CD4-positive, alpha-beta memory T cell (primary cell): ENCODE measurements at regions of chr4 and their contacts with region 1.

Region 1: GRCh38 chr4:47933840-47934239 is 19.5 kb upstream of the NFXL1 start:
- DNase-seq: peak in 4 of 5 donors; percentile 41 to 53 (median 50)
- H3K4me3 ChIP-seq: no peak overlapping the region
- H3K4me3 Mint-ChIP-seq: no peak overlapping the region
- H3K27ac ChIP-seq: no peak overlapping the region
- H3K27ac Mint-ChIP-seq: no peak overlapping the region
- H3K4me1 ChIP-seq: no peaks in the 10 kb centered on the region
- H3K4me1 Mint-ChIP-seq: peaks cover 5 to 7% (median 6%) of the 10 kb centered on the region in 4 donors
- H3K27me3 ChIP-seq: no peaks in the 10 kb centered on the region
- H3K27me3 Mint-ChIP-seq: peaks cover 0 to 1% of the 10 kb centered on the region in 2 donors

Region 2: GRCh38 chr4:47668810-47669408 is 264.9 kb before region 1 on chr4:
- CTCF ChIA-PET with region 1: interaction called, 60 read pairs
- POLR2A ChIA-PET with region 1: interaction called, 5 read pairs
- intact Hi-C with region 1: loop called (anchors 1 kb)
- DNase-seq: peak in 4 of 5 donors; percentile 24 to 33 (median 28)
- H3K4me3 ChIP-seq: no peak overlapping the region
- H3K4me3 Mint-ChIP-seq: no peak overlapping the region
- H3K27ac ChIP-seq: no peak overlapping the region
- H3K27ac Mint-ChIP-seq: no peak overlapping the region
- H3K4me1 ChIP-seq: no peaks in the 10 kb centered on the region
- H3K4me1 Mint-ChIP-seq: peaks cover 0 to 2% (median 1%) of the 10 kb centered on the region in 4 donors
- H3K27me3 ChIP-seq: no peaks in the 10 kb centered on the region
- H3K27me3 Mint-ChIP-seq: peaks cover 7 to 18% of the 10 kb centered on the region in 2 donors

Region 3: GRCh38 chr4:47686294-47686872 is 247.5 kb before region 1 on chr4:
- CTCF ChIA-PET with region 1: interaction called, 56 read pairs
- POLR2A ChIA-PET with region 1: no interaction called
- intact Hi-C with region 1: loop called (anchors 1 kb)
- DNase-seq: peak; percentile 53 to 64 (median 61)
- H3K4me3 ChIP-seq: no peak overlapping the region
- H3K4me3 Mint-ChIP-seq: no peak overlapping the region
- H3K27ac ChIP-seq: no peak overlapping the region
- H3K27ac Mint-ChIP-seq: no peak overlapping the region
- H3K4me1 ChIP-seq: no peaks in the 10 kb centered on the region
- H3K4me1 Mint-ChIP-seq: peaks cover 0 to 3% (median 0%) of the 10 kb centered on the region in 4 donors
- H3K27me3 ChIP-seq: no peaks in the 10 kb centered on the region
- H3K27me3 Mint-ChIP-seq: peaks cover 4% of the 10 kb centered on the region in 2 donors

Region 4: GRCh38 chr4:47972181-47972580 is 38.3 kb after region 1 on chr4:
- CTCF ChIA-PET with region 1: no interaction called
- POLR2A ChIA-PET with region 1: no interaction called
- intact Hi-C with region 1: no loop called
- DNase-seq: no peak
- H3K4me3 ChIP-seq: no peak overlapping the region
- H3K4me3 Mint-ChIP-seq: no peak overlapping the region
- H3K27ac ChIP-seq: no peak overlapping the region
- H3K27ac Mint-ChIP-seq: no peak overlapping the region
- H3K4me1 ChIP-seq: no peaks in the 10 kb centered on the region
- H3K4me1 Mint-ChIP-seq: no peaks in the 10 kb centered on the region
- H3K27me3 ChIP-seq: no peaks in the 10 kb centered on the region
- H3K27me3 Mint-ChIP-seq: peaks cover 1 to 8% of the 10 kb centered on the region in 2 donors